BJ (cell line): ENCODE measurements at regions of chr15 and their contacts with region 1.

Region 1: DNA sequence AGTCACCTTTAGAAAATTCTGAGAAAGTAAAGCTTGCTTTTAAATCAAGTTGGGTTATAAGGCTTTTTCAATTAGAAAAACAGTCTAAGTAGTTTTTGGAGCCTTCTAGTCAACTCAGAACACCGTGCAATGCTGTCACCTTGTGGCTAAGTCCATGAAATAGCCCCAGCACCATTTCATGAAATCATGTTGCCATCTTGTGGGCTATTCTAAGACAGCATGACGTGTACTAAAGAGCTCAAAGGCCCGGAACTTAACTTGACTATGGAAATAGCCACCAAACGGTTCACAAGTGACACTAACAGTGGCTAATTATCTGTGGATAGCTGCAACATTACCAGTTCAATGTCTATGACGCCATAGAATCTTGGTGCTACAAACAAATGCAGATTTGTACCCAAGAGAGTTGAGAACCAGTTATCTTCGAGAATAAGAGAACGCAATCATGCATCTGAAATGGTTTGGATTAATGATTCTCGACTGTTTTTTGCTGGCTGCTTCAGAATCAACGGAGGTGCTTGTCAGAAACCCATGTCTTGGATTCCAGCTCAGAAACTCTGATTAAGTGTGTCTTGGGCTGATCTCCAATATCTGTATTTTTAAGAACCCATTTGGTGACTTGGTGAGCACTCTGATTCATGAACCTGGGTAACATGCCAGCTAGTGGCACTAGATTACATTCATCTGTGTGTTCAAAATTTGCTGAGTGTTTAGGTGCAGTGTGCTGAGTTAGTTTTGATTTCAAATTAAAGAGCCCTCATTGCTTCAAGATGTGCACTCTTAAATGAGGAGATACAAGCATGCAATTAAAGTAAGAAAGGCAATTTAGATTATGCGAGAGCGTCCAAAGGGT is 111.2 kb upstream of the MCTP2 start:
- DNase-seq: peak; percentile 39
- H3K4me3 ChIP-seq: no peak overlapping the region
- H3K27me3 ChIP-seq: no peaks in the 10 kb centered on the region
- CTCF ChIP-seq: peak; percentile 94

Region 2: GRCh38 chr15:93035953-93036800 is 1084.0 kb before region 1 on chr15:
- CTCF ChIA-PET with region 1: interaction called, 74 read pairs
- POLR2A ChIA-PET with region 1: no interaction called
- DNase-seq: no peak
- H3K4me3 ChIP-seq: no peak overlapping the region
- H3K27me3 ChIP-seq: no peaks in the 10 kb centered on the region
- CTCF ChIP-seq: peak; percentile 27; the same call in 1 of the 2 replicates

Region 3: DNA sequence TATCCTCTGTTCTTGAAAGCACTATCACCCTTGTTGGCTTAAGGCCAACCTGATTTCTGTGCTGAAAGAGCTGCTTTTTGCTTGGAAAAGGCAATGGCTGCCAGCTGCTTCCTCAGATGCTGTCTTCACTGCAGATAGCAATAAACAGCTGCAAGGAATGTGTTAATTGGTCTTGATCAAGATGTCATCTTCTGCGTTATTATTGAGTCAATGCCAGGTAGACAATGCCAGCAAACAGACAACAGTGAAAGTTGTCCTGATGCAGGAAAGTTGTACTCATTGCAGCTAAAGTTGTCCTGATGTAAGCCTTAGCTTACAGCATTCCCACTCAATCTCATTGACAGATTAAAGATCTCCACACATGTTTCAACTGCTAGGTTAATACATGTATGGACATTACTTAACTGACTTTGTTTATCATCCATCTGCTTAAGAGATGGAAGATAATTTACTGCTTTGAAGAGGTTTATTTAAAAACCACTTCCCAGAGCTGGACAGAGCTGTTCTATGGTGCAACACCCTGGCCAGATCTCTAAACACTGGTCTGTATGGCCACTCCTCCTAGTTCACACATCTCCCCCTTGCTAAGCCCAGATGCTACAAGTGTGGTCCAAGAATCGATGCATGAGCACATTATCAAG is 139.8 kb before region 1 on chr15:
- CTCF ChIA-PET with region 1: interaction called, 16 read pairs
- POLR2A ChIA-PET with region 1: no interaction called
- DNase-seq: no peak
- H3K4me3 ChIP-seq: no peak overlapping the region
- H3K27me3 ChIP-seq: no peaks in the 10 kb centered on the region
- CTCF ChIP-seq: no peak

Region 4: DNA sequence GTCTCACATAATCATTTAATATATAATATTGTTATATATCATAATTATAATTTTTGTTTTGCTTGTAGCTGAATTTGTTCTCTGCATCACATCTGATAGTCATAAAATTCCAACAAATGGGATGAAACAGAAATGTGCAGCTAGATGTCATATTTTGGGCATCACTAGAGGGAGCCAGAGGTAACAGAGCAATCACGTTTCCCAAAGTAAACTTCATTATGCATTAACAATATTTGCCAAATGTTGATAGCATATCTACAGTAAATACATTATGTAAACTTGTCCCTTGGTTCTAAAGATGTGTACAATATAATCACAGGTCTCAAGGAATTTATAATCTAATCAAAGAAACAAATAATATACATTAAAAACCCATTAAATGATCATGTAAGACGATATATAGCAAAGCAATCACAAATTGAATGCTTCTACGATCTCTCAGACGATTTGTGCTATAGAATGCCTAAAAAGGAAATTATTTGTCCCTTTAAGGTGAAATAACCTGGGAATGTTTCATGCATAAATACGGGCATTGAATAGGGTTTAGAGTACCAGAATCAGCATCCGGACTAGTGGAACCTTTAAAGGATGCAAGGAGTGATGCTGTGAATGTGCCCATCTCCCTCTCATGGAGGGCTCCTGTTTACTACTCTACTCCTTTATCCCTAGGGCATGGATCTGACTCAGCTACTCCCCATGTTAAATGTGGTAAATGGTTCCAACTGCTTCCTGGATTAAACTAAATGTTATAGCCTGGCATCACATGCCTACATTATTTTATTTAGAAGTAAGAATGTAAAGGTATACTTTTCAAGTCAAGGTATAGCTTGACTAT is 122.8 kb before region 1 on chr15:
- CTCF ChIA-PET with region 1: interaction called, 66 read pairs
- POLR2A ChIA-PET with region 1: no interaction called
- DNase-seq: no peak
- H3K4me3 ChIP-seq: no peak overlapping the region
- H3K27me3 ChIP-seq: no peaks in the 10 kb centered on the region
- CTCF ChIP-seq: peak; percentile 77

Region 5: DNA sequence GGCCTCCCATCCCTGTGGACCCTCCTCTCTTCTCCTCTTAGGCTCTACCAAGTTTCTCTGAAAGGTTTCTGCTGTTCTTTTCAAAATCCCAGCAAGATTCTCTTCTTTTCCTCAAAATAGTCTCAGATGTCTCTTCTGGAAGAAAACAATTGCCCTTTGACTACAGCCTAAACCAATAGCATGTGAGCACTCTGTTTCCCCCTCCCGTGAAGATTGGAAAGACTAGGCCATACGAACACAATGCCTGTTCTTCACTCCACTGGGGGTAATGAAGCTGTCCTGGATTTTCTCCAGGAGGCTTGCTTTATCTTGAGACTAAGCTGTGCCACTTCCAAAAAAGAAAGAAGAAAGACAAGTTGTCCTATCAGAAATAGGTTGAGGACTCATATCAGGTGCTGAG is 67.4 kb before region 1 on chr15:
- CTCF ChIA-PET with region 1: no interaction called
- POLR2A ChIA-PET with region 1: no interaction called
- DNase-seq: no peak
- H3K4me3 ChIP-seq: no peak overlapping the region
- H3K27me3 ChIP-seq: peaks cover 4% of the 10 kb centered on the region
- CTCF ChIP-seq: no peak

Region 6: GRCh38 chr15:94105760-94106159 is 14.4 kb before region 1 on chr15:
- CTCF ChIA-PET with region 1: interaction called, 14 read pairs
- POLR2A ChIA-PET with region 1: no interaction called
- DNase-seq: no peak
- H3K4me3 ChIP-seq: no peak overlapping the region
- H3K27me3 ChIP-seq: no peaks in the 10 kb centered on the region
- CTCF ChIP-seq: no peak